CD4-positive, alpha-beta T cell (primary cell): ENCODE measurements at regions of chr19 and their contacts with region 1.

Region 1: GRCh38 chr19:10332955-10333757 is at the start of gene RAVER1:
- DNase-seq: peak; percentile 96 to 100 (median 98)
- ATAC-seq: peak; percentile 96
- H3K4me3 ChIP-seq: peak within 1 kb of the TSS; percentile 91
- H3K4me3 Mint-ChIP-seq: peak within 1 kb of the TSS; percentile 96
- H3K27ac ChIP-seq: peak within 1 kb of the TSS; percentile 87 to 91
- H3K27ac Mint-ChIP-seq: peak within 1 kb of the TSS; percentile 92
- H3K4me1 ChIP-seq: peaks cover 54% of the 10 kb centered on the region
- H3K4me1 Mint-ChIP-seq: peaks cover 23% of the 10 kb centered on the region
- H3K27me3 ChIP-seq: no peaks in the 10 kb centered on the region
- H3K27me3 Mint-ChIP-seq: no peaks in the 10 kb centered on the region
- CTCF ChIP-seq: no peak
- total RNA-seq, gene RAVER1: 20.5 to 21.3 TPM

Region 2: GRCh38 chr19:10194500-10195289 is 138.5 kb before region 1 on chr19 and contains the start of gene DNMT1:
- CTCF ChIA-PET with region 1: no interaction called
- POLR2A ChIA-PET with region 1: no interaction called
- intact Hi-C with region 1: loop called in 1 of 2 experiments (anchors 5 kb)
- DNase-seq: peak; percentile 86 to 98 (median 96)
- ATAC-seq: peak; percentile 93
- H3K4me3 ChIP-seq: peak within 1 kb of the TSS; percentile 99
- H3K4me3 Mint-ChIP-seq: peak within 1 kb of the TSS; percentile 98
- H3K27ac ChIP-seq: peak within 1 kb of the TSS; percentile 77 to 80
- H3K27ac Mint-ChIP-seq: peak within 1 kb of the TSS; percentile 88
- H3K4me1 ChIP-seq: peaks cover 49% of the 10 kb centered on the region
- H3K4me1 Mint-ChIP-seq: peaks cover 32% of the 10 kb centered on the region
- H3K27me3 ChIP-seq: no peaks in the 10 kb centered on the region
- H3K27me3 Mint-ChIP-seq: no peaks in the 10 kb centered on the region
- CTCF ChIP-seq: no peak
- total RNA-seq, gene DNMT1: 159 to 160 TPM

Region 3: GRCh38 chr19:10292206-10292788 is 40.9 kb before region 1 on chr19:
- CTCF ChIA-PET with region 1: no interaction called
- POLR2A ChIA-PET with region 1: interaction called, 7 read pairs
- intact Hi-C with region 1: loop called in 1 of 2 experiments (anchors 5 kb)
- DNase-seq: peak in 12 of 14 experiments; percentile 38 to 79 (median 58)
- ATAC-seq: peak; percentile 45
- H3K4me3 ChIP-seq: peak overlapping the region; percentile 48
- H3K4me3 Mint-ChIP-seq: peak overlapping the region; percentile 82
- H3K27ac ChIP-seq: no peak overlapping the region
- H3K27ac Mint-ChIP-seq: peak overlapping the region; percentile 40
- H3K4me1 ChIP-seq: peaks cover 88% of the 10 kb centered on the region
- H3K4me1 Mint-ChIP-seq: peaks cover 62% of the 10 kb centered on the region
- H3K27me3 ChIP-seq: peaks cover 82 to 85% of the 10 kb centered on the region in 2 experiments
- H3K27me3 Mint-ChIP-seq: peaks cover 88% of the 10 kb centered on the region
- CTCF ChIP-seq: no peak

Region 4: DNA sequence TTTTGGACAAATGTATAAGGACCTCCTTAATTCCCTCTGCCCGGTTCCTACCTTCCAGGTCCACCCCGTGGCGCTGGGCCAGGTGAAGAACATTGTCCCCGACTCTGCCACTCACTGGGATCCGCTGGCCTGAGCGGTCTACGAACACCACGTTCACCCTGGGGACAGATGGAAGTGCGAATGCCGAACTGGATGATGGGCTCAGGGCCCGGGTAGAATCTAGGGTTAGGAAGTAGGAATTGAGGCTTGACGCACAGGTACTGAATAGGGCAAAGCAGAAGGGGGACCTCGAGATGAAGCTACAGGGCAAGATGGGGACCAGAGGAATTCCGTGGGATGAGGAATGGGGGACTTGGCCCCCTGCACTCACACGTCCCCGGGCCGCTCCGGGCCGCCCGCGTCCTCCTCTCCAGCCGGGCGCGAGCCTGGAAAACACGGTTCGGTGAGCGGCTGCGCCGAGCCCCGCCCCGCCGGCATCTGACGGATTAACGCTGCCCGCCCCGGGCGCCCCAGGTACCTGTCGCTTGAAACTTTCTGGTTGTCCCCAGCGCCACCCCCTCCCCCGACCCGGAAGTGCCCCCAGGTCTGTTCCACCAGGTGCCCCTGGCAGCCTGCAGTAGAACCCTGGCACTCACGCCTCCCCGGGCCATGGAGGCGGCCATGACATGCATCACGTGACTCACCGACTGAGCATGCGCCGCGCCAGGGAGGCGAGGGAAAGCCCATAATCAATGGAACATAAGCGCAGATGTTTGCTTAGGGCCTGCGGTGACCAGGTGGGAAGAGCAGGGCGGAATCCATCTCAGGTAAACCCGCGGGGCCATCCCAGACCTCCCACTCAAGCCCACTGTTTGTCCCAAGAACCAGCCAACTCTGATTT is 17.6 kb before region 1 on chr19 and contains the start of gene FDX2:
- CTCF ChIA-PET with region 1: no interaction called
- POLR2A ChIA-PET with region 1: interaction called, 8 read pairs
- intact Hi-C with region 1: loop called in 1 of 2 experiments (anchors 1 kb)
- DNase-seq: peak; percentile 84 to 95 (median 88)
- ATAC-seq: peak; percentile 93
- H3K4me3 ChIP-seq: peak within 1 kb of the TSS; percentile 79
- H3K4me3 Mint-ChIP-seq: peak within 1 kb of the TSS; percentile 72
- H3K27ac ChIP-seq: peak within 1 kb of the TSS in 1 of 2 donors; percentile 35
- H3K27ac Mint-ChIP-seq: peak within 1 kb of the TSS; percentile 70
- H3K4me1 ChIP-seq: peaks cover 19% of the 10 kb centered on the region
- H3K4me1 Mint-ChIP-seq: peaks cover 17% of the 10 kb centered on the region
- H3K27me3 ChIP-seq: no peaks in the 10 kb centered on the region
- H3K27me3 Mint-ChIP-seq: no peaks in the 10 kb centered on the region
- CTCF ChIP-seq: no peak
- total RNA-seq, gene FDX2: 1.2 to 1.9 TPM

Region 5: DNA sequence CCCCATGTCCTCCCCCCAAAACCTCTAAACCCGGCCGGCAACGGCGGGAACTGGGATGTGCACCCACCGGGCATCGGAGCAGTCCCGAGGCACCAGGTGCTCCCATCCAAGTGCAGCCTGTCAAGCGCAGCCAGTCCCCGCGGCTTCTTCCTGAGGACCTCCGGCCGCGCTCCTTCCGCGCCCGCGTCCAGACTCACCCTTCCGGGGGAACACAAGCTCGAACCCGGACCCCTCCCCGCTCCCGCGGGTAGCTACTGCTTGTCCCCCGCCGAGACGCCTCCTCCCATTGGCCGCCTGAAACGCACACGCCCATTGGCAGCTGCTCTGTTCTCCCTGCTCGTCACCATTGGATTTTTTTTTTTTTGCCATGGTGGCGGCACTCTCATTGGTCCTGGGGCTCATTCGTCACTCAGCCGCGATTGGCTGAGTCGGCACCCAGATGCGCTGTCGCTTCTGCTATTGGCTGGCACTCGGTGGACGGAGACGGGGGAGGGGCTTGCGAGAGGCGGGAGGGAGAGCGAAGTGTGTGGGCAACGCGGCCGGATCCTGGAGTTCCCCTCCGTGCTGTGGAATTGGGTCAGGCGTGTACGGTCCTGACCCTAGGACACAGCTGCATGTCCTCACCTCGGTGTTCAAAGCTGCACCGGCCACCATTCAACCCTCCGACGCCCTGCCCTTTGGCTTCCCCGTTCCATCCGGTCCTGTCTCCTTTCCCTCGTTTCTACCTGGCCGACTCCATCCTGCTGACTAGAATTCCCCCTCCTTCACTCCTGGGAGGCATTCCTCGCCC is 47.4 kb after region 1 on chr19 and contains the start of gene TYK2:
- CTCF ChIA-PET with region 1: no interaction called
- POLR2A ChIA-PET with region 1: interaction called, 10 read pairs
- intact Hi-C with region 1: loop called in 1 of 2 experiments (anchors 1 kb)
- DNase-seq: peak; percentile 88 to 99 (median 95)
- ATAC-seq: peak; percentile 96
- H3K4me3 ChIP-seq: peak within 1 kb of the TSS; percentile 81
- H3K4me3 Mint-ChIP-seq: peak within 1 kb of the TSS; percentile 92
- H3K27ac ChIP-seq: peak within 1 kb of the TSS; percentile 81 to 84
- H3K27ac Mint-ChIP-seq: peak within 1 kb of the TSS; percentile 77
- H3K4me1 ChIP-seq: peaks cover 25% of the 10 kb centered on the region
- H3K4me1 Mint-ChIP-seq: peaks cover 24% of the 10 kb centered on the region
- H3K27me3 ChIP-seq: no peaks in the 10 kb centered on the region
- H3K27me3 Mint-ChIP-seq: no peaks in the 10 kb centered on the region
- CTCF ChIP-seq: no peak
- total RNA-seq, gene TYK2: 229 to 253 TPM

Region 6: DNA sequence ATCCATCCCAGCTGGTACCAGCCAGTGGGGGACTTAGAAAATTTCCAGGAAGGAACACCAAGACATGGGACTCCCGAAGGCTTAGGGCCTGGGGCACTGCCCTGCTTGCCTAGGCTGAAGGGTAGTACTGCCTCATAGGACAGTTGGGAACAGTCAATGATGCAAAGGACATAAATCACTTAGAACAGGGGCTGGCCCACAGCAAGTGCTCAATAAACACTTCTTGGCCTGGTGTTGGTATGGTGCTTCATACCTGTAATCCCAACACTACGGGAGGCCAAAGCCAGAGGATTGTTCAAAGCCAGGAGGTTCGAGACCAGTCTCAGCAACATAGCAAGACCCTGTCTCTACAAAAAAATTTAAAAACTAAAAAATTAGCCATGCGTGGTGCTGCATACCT is 164.2 kb after region 1 on chr19:
- CTCF ChIA-PET with region 1: no interaction called
- POLR2A ChIA-PET with region 1: no interaction called
- intact Hi-C with region 1: no loop called
- DNase-seq: no peak
- ATAC-seq: no peak
- H3K4me3 ChIP-seq: no peak overlapping the region
- H3K4me3 Mint-ChIP-seq: peak overlapping the region; percentile 57
- H3K27ac ChIP-seq: no peak overlapping the region
- H3K27ac Mint-ChIP-seq: no peak overlapping the region
- H3K4me1 ChIP-seq: peaks cover 48% of the 10 kb centered on the region
- H3K4me1 Mint-ChIP-seq: peaks cover 25% of the 10 kb centered on the region
- H3K27me3 ChIP-seq: no peaks in the 10 kb centered on the region
- H3K27me3 Mint-ChIP-seq: no peaks in the 10 kb centered on the region
- CTCF ChIP-seq: no peak

Region 7: DNA sequence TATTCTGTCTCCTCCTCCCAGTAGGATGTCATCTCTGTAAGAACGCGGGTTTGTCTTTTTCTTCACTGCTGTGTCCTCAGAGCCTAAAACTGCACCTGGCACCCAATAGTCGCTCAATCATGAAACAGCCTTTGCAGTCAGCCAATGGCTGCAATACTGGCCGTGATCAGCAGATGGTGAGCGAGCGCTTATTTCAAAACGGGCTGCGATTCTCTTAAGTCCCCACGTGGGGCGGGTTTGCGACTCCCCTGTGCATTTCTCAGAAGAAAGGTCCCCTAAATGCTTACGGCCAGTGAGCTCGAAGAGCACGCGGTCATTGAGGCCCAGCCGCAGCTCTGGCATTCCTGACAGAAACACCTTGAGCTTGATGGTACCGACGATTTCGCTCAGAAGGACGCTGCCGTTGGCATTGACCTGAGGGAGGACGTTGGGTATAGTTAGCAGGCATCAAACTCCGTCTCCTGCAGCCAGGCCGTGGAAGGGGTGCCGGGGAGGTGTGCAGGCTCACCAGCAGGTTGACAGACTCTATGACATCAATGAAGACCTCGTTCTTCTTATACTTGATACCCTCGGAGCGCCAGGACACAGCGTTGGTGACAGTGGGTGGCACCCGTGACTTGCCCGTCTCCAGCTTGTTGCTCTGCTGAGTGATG is 247.9 kb after region 1 on chr19:
- CTCF ChIA-PET with region 1: no interaction called
- POLR2A ChIA-PET with region 1: no interaction called
- intact Hi-C with region 1: no loop called
- DNase-seq: peak; percentile 81 to 95 (median 89)
- ATAC-seq: peak; percentile 97
- H3K4me3 ChIP-seq: no peak overlapping the region
- H3K4me3 Mint-ChIP-seq: no peak overlapping the region
- H3K27ac ChIP-seq: no peak overlapping the region
- H3K27ac Mint-ChIP-seq: no peak overlapping the region
- H3K4me1 ChIP-seq: peaks cover 18% of the 10 kb centered on the region
- H3K4me1 Mint-ChIP-seq: peaks cover 25% of the 10 kb centered on the region
- H3K27me3 ChIP-seq: no peaks in the 10 kb centered on the region
- H3K27me3 Mint-ChIP-seq: no peaks in the 10 kb centered on the region
- CTCF ChIP-seq: peak; percentile 99